PC-3 (cell line): ENCODE measurements at regions of chr2 and their contacts with region 1.

Region 1: GRCh38 chr2:181970160-181970794 is 15.4 kb upstream of the PPP1R1C start:
- DNase-seq: no peak
- ATAC-seq: no peak
- H3K4me3 ChIP-seq: no peak overlapping the region
- H3K27ac ChIP-seq: no peak overlapping the region
- H3K4me1 ChIP-seq: peaks cover 7% of the 10 kb centered on the region; the same call in 1 of the 2 replicates
- H3K27me3 ChIP-seq: no peaks in the 10 kb centered on the region
- CTCF ChIP-seq: no peak

Region 2: GRCh38 chr2:182049372-182050148 is 79.3 kb after region 1 on chr2:
- CTCF ChIA-PET with region 1: no interaction called
- POLR2A ChIA-PET with region 1: no interaction called
- intact Hi-C with region 1: no loop called
- DNase-seq: no peak
- ATAC-seq: no peak
- H3K4me3 ChIP-seq: no peak overlapping the region
- H3K27ac ChIP-seq: no peak overlapping the region
- H3K4me1 ChIP-seq: no peaks in the 10 kb centered on the region
- H3K27me3 ChIP-seq: no peaks in the 10 kb centered on the region
- CTCF ChIP-seq: no peak

Region 3: GRCh38 chr2:182066400-182067087 is 96.3 kb after region 1 on chr2:
- CTCF ChIA-PET with region 1: no interaction called
- POLR2A ChIA-PET with region 1: no interaction called
- intact Hi-C with region 1: loop called (anchors 5 kb)
- DNase-seq: peak; percentile 88
- ATAC-seq: peak; percentile 85
- H3K4me3 ChIP-seq: no peak overlapping the region
- H3K27ac ChIP-seq: peak overlapping the region; percentile 36
- H3K4me1 ChIP-seq: peaks cover 34% of the 10 kb centered on the region
- H3K27me3 ChIP-seq: no peaks in the 10 kb centered on the region
- CTCF ChIP-seq: no peak

Region 4: GRCh38 chr2:182522405-182522896 is 552.2 kb after region 1 on chr2:
- CTCF ChIA-PET with region 1: no interaction called
- POLR2A ChIA-PET with region 1: no interaction called
- intact Hi-C with region 1: no loop called
- DNase-seq: no peak
- ATAC-seq: 0 out of 2 replicates have a peak, but pooled peaks have one; percentile 27
- H3K4me3 ChIP-seq: no peak overlapping the region
- H3K27ac ChIP-seq: no peak overlapping the region
- H3K4me1 ChIP-seq: no peaks in the 10 kb centered on the region
- H3K27me3 ChIP-seq: peaks cover 21% of the 10 kb centered on the region; the same call in 1 of the 2 replicates
- CTCF ChIP-seq: no peak